ENCODE measurements at regions of chr12 and their contacts with region 1.

Region 1: GRCh38 chr12:111942557-111942956 is 70.4 kb downstream of the TMEM116 start:
- DNase-seq: no peak
- H3K4me3 ChIP-seq: no peak overlapping the region
- H3K27ac ChIP-seq: no peak overlapping the region
- H3K4me1 ChIP-seq: no peaks in the 10 kb centered on the region
- H3K27me3 ChIP-seq: no peaks in the 10 kb centered on the region
- CTCF ChIP-seq: no peak
- POLR2A ChIP-seq: no peak

Region 2: DNA sequence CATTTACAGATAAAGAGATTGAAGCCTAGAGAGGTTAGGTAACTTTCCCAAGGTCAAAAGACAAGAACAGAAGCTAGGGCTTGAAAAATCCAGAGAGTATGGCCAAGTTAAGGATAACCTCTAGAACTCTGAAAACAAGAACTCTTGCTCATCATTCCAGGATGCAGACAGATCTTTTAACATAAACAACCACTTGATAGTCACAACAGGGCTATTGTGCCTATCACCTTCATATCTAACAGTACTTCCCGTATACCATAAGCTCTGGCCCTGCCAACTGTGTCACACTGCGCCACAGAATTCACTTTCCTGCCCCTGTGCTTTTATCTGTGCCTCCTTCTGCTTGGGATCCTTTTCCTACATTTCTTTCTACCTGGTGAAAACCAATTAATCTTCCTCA is 88.9 kb after region 1 on chr12:
- intact Hi-C with region 1: loop called (anchors 5 kb)
- DNase-seq: no peak
- H3K4me3 ChIP-seq: no peak overlapping the region
- H3K27ac ChIP-seq: no peak overlapping the region
- H3K4me1 ChIP-seq: no peaks in the 10 kb centered on the region
- H3K27me3 ChIP-seq: no peaks in the 10 kb centered on the region
- CTCF ChIP-seq: no peak
- POLR2A ChIP-seq: no peak